ENCODE measurements at regions of chr10 and their contacts with region 1.

Region 1: GRCh38 chr10:110508806-110509544 is 11.3 kb downstream of the DUSP5 start:
- DNase-seq: peak; percentile 60
- H3K4me3 ChIP-seq: no peak overlapping the region
- H3K27ac ChIP-seq: peak overlapping the region; percentile 27
- H3K4me1 ChIP-seq: peaks cover 34% of the 10 kb centered on the region
- H3K27me3 ChIP-seq: no peaks in the 10 kb centered on the region
- CTCF ChIP-seq: no peak

Region 2: DNA sequence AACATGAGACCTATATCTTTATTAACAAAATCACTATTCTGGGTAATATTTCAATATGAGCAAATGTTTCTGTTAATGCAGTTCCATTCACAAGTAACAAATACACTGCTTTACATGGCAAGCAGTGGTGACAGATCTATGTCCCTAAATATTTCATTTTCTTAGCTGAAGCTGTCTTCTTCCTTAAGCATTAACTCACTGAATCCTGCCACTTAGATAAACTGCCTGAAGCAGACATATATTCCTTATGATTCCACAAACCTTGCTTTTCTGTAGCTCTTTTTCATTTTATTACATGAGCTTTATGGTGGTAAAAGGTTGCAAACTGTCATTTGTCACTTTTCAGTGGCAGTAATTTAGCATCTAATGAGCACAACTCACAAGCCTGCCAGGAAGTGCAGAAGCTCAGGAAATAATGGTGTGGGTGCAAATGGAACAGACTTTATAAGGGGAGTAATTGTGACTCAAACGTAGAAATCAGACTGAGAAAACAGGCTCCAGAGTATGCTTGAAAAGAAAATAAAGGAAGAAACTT is 802.9 kb before region 1 on chr10:
- CTCF ChIA-PET with region 1: no interaction called
- POLR2A ChIA-PET with region 1: interaction called, 12 read pairs
- intact Hi-C with region 1: no loop called
- DNase-seq: no peak
- H3K4me3 ChIP-seq: no peak overlapping the region
- H3K27ac ChIP-seq: no peak overlapping the region
- H3K4me1 ChIP-seq: no peaks in the 10 kb centered on the region
- H3K27me3 ChIP-seq: no peaks in the 10 kb centered on the region
- CTCF ChIP-seq: no peak

Region 3: GRCh38 chr10:110535958-110536891 is 27.2 kb after region 1 on chr10:
- CTCF ChIA-PET with region 1: no interaction called
- POLR2A ChIA-PET with region 1: no interaction called
- intact Hi-C with region 1: no loop called
- DNase-seq: peak; percentile 89
- H3K4me3 ChIP-seq: peak overlapping the region; percentile 13
- H3K27ac ChIP-seq: peak overlapping the region; percentile 76
- H3K4me1 ChIP-seq: peaks cover 47% of the 10 kb centered on the region
- H3K27me3 ChIP-seq: no peaks in the 10 kb centered on the region
- CTCF ChIP-seq: peak; percentile 54

Measured in A673 (cell line).